Right cardiac atrium (tissue), 5 donors: ENCODE measurements at regions of chr20 and their contacts with region 1.

Region 1: GRCh38 chr20:53216856-53217576 is 244.9 kb downstream of the TSHZ2 start:
- DNase-seq: peak; percentile 63 to 89 (median 85)
- ATAC-seq: peak; percentile 72 to 78
- H3K4me3 ChIP-seq: no peak overlapping the region
- H3K27ac ChIP-seq: no peak overlapping the region
- H3K4me1 ChIP-seq: no peaks in the 10 kb centered on the region
- H3K27me3 ChIP-seq: no peaks in the 10 kb centered on the region

Region 2: DNA sequence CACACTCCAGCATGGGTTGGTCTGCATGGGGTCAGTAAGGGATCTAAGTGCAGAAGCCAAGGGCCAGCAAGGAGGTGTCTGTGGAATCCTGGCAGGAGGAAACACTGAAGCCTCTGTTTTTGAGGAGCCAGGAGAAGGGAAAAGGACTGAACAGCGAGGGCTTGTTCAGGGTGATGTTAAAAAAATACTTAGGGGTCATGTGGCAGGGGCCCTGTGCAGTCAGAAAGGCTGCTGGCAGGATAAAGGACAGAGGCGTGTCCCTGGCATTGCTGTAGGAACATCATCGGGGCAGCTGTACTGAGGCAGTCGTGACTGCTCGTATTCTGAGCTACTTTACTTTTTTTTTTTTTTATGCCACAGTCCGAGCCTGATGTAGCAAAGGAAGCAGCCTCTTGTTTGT is 898.4 kb before region 1 on chr20:
- intact Hi-C with region 1: loop called in 1 of 4 experiments (anchors 5 kb)
- DNase-seq: no peak
- ATAC-seq: no peak
- H3K4me3 ChIP-seq: no peak overlapping the region
- H3K27ac ChIP-seq: no peak overlapping the region
- H3K4me1 ChIP-seq: no peaks in the 10 kb centered on the region
- H3K27me3 ChIP-seq: no peaks in the 10 kb centered on the region